Naive thymus-derived CD4-positive, alpha-beta T cell (primary cell): ENCODE measurements at regions of chr7 and their contacts with region 1.

Region 1: DNA sequence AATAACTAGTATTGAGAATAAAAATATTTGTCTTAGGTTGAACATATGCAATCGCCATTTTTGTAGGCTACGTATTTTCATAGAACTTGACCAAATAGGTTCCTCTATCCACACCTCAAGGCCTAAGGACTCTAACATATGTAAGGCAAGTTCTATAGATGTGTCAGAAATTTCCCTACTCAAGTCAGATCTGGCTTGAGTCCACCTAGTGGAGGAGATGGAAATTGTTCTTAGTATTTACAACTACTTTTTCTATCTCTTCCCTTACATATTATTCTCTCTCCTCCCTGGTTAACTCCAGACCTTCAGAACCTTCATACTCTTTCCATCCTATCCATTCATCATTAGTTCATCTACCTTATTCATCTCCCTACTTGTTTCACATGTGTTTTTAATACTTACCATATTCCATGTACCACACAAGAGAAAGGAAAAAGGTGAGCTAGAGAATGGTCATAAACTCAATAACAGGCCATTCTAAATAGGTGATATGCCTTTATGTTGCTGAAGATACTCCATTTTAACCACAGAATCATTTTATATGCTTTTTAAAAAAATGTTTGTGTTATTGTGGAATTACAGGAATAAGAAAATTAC is 174.5 kb upstream of the HDAC9 start:
- DNase-seq: peak in 4 of 9 donors; percentile 1 to 15 (median 2)
- ATAC-seq: peak; percentile 67
- H3K4me3 ChIP-seq: no peak overlapping the region
- H3K4me3 Mint-ChIP-seq: no peak overlapping the region
- H3K27ac ChIP-seq: no peak overlapping the region
- H3K27ac Mint-ChIP-seq: no peak overlapping the region
- H3K4me1 ChIP-seq: no peaks in the 10 kb centered on the region
- H3K4me1 Mint-ChIP-seq: peaks cover 0 to 2% (median 0%) of the 10 kb centered on the region in 7 donors
- H3K27me3 ChIP-seq: no peaks in the 10 kb centered on the region
- H3K27me3 Mint-ChIP-seq: peaks cover 0 to 6% (median 0%) of the 10 kb centered on the region in 5 donors

Region 2: DNA sequence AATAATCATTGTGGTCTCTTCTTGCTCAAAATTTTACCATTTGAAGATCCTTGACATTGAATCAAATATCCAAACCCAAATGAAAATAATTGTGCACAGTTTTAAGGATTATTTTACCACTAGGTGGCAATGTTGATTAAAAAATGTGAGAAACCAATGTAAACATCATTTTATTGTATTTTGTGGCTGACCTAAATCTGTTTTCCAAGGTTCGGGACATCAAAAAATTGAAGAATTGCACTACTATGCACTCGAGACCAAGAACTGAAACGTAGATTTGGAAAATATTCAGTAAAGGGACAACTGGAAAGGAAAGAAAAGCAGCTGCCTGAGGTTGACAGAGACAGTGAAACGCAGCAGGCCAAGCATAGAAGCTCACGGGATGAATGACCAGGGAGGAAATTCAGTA is 640.1 kb before region 1 on chr7:
- CTCF ChIA-PET with region 1: interaction called, 4 read pairs
- POLR2A ChIA-PET with region 1: no interaction called
- intact Hi-C with region 1: loop called (anchors 1 kb)
- DNase-seq: peak in 4 of 9 donors; percentile 12 to 35 (median 18)
- ATAC-seq: no peak
- H3K4me3 ChIP-seq: no peak overlapping the region
- H3K4me3 Mint-ChIP-seq: no peak overlapping the region
- H3K27ac ChIP-seq: no peak overlapping the region
- H3K27ac Mint-ChIP-seq: no peak overlapping the region
- H3K4me1 ChIP-seq: no peaks in the 10 kb centered on the region
- H3K4me1 Mint-ChIP-seq: no peaks in the 10 kb centered on the region
- H3K27me3 ChIP-seq: no peaks in the 10 kb centered on the region
- H3K27me3 Mint-ChIP-seq: peaks cover 0 to 2% (median 0%) of the 10 kb centered on the region in 5 donors

Region 3: DNA sequence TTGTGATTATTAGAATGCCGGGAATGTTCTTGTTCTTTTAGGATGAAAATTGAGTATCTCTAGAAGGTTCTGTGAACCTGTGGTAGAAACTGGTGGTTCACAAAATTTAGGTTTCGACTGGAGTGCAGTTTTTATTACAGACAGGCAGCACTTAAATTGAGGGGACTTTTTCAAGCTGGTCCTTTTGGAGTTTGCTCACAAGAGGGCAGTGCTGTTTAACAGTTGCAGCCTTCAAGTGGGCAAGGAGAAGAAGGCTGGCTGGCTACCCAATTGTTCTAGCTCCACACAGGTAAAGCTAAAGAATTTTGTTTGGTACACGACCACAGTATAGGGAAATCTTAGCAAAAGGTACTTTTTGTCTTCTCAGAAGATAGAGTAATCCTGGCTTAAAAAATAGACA is 614.3 kb before region 1 on chr7:
- CTCF ChIA-PET with region 1: no interaction called
- POLR2A ChIA-PET with region 1: no interaction called
- intact Hi-C with region 1: loop called (anchors 1 to 2 kb)
- DNase-seq: peak in 5 of 9 donors; percentile 5 to 15 (median 8)
- ATAC-seq: peak; percentile 54
- H3K4me3 ChIP-seq: no peak overlapping the region
- H3K4me3 Mint-ChIP-seq: no peak overlapping the region
- H3K27ac ChIP-seq: no peak overlapping the region
- H3K27ac Mint-ChIP-seq: no peak overlapping the region
- H3K4me1 ChIP-seq: no peaks in the 10 kb centered on the region
- H3K4me1 Mint-ChIP-seq: no peaks in the 10 kb centered on the region
- H3K27me3 ChIP-seq: no peaks in the 10 kb centered on the region
- H3K27me3 Mint-ChIP-seq: peaks cover 0 to 16% (median 2%) of the 10 kb centered on the region in 5 donors

Region 4: DNA sequence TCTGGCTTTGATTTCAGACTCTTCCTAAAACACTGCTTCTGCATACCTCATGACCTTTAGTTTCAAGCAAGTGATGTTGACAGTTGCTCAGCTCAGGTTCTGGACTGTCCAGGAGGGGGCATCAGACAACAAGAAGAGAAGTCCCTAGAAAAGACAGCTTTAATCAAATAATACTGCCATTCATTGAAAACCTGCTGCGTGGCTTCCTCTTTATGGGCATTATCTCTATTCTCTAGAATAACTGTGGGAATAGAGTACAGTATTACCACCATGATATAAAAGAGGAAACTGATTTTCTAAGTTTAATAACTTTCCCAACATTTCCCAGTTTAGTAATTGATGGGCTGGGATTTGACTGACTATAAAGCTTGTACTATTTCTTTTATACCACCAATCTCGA is 551.2 kb before region 1 on chr7:
- CTCF ChIA-PET with region 1: no interaction called
- POLR2A ChIA-PET with region 1: no interaction called
- intact Hi-C with region 1: loop called (anchors 1 kb)
- DNase-seq: peak in 8 of 9 donors; percentile 4 to 47 (median 30)
- ATAC-seq: peak; percentile 70
- H3K4me3 ChIP-seq: no peak overlapping the region
- H3K4me3 Mint-ChIP-seq: no peak overlapping the region
- H3K27ac ChIP-seq: no peak overlapping the region
- H3K27ac Mint-ChIP-seq: no peak overlapping the region
- H3K4me1 ChIP-seq: no peaks in the 10 kb centered on the region
- H3K4me1 Mint-ChIP-seq: peaks cover 0 to 4% (median 0%) of the 10 kb centered on the region in 7 donors
- H3K27me3 ChIP-seq: no peaks in the 10 kb centered on the region
- H3K27me3 Mint-ChIP-seq: no peaks in the 10 kb centered on the region

Region 5: DNA sequence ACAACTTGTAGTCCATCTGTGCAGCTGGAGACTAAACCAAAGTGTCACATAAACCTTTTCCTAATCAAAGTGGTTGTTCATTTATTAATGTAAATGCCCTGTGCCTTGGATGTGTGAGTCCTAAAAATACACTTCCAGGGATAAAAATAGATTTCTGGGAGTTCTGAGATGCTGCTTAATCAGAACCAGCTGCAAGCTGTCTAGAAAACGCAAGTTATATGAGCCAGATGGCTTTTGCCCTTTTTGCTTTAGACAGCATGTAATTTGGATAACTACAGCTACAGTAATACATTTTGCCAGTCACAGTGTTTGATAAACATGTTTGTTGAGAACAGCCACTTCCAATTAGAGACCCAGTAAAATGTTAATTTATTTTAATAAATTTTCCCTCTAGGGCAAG is 108.3 kb before region 1 on chr7:
- CTCF ChIA-PET with region 1: no interaction called
- POLR2A ChIA-PET with region 1: no interaction called
- intact Hi-C with region 1: no loop called
- DNase-seq: no peak
- ATAC-seq: no peak
- H3K4me3 ChIP-seq: no peak overlapping the region
- H3K4me3 Mint-ChIP-seq: no peak overlapping the region
- H3K27ac ChIP-seq: no peak overlapping the region
- H3K27ac Mint-ChIP-seq: no peak overlapping the region
- H3K4me1 ChIP-seq: no peaks in the 10 kb centered on the region
- H3K4me1 Mint-ChIP-seq: peaks cover 0 to 5% (median 0%) of the 10 kb centered on the region in 7 donors
- H3K27me3 ChIP-seq: no peaks in the 10 kb centered on the region
- H3K27me3 Mint-ChIP-seq: no peaks in the 10 kb centered on the region

Region 6: DNA sequence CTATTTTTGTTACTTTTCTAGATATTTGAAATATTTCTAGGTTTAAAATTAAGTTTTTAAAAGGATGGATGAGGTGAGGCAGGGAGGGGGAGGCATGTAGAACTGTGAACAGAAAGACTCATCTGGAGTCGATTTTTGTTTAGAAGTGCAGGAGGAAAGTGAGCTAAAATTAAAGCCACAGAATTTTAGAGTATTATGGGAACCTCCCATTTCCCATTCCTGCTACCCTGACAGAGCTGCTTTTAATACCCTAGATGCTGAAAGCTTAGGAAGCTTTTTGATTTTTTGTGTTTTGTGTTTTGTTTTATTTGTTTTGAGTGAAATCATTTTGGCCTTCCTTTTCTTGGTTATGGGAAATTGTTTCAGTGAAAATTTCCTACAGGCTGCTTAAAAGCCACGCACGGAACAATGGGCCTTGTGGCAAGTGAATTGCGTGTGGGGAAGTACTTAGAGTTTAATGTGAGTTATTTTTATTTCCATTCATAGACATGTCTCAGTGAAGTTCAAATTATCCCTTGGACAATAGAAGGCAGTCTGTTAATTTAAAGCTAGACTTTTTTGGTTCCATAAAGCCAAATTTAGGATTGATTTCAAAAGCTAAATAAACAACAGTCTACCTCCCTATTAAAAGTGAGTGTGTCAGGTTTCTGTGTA is 72.5 kb after region 1 on chr7:
- CTCF ChIA-PET with region 1: no interaction called
- POLR2A ChIA-PET with region 1: no interaction called
- intact Hi-C with region 1: no loop called
- DNase-seq: no peak
- ATAC-seq: no peak
- H3K4me3 ChIP-seq: no peak overlapping the region
- H3K4me3 Mint-ChIP-seq: no peak overlapping the region
- H3K27ac ChIP-seq: no peak overlapping the region
- H3K27ac Mint-ChIP-seq: peak overlapping the region in 1 of 9 donors; percentile 32
- H3K4me1 ChIP-seq: no peaks in the 10 kb centered on the region
- H3K4me1 Mint-ChIP-seq: peaks cover 0 to 1% (median 0%) of the 10 kb centered on the region in 7 donors
- H3K27me3 ChIP-seq: no peaks in the 10 kb centered on the region
- H3K27me3 Mint-ChIP-seq: peaks cover 0 to 4% (median 2%) of the 10 kb centered on the region in 5 donors

Region 7: GRCh38 chr7:18770154-18770811 is 449.2 kb after region 1 on chr7:
- CTCF ChIA-PET with region 1: no interaction called
- POLR2A ChIA-PET with region 1: no interaction called
- intact Hi-C with region 1: no loop called
- DNase-seq: no peak
- ATAC-seq: no peak
- H3K4me3 ChIP-seq: no peak overlapping the region
- H3K4me3 Mint-ChIP-seq: no peak overlapping the region
- H3K27ac ChIP-seq: no peak overlapping the region
- H3K27ac Mint-ChIP-seq: no peak overlapping the region
- H3K4me1 ChIP-seq: no peaks in the 10 kb centered on the region
- H3K4me1 Mint-ChIP-seq: no peaks in the 10 kb centered on the region
- H3K27me3 ChIP-seq: no peaks in the 10 kb centered on the region
- H3K27me3 Mint-ChIP-seq: no peaks in the 10 kb centered on the region